BJ (cell line): ENCODE measurements at regions of chr2 and their contacts with region 1.

Region 1: GRCh38 chr2:191677646-191678436 is at the start of gene NABP1:
- DNase-seq: peak; percentile 84
- H3K4me3 ChIP-seq: peak within 1 kb of the TSS; percentile 76
- H3K27me3 ChIP-seq: no peaks in the 10 kb centered on the region
- CTCF ChIP-seq: no peak
- polyA plus RNA-seq, gene NABP1: 63.8 and 93.7 TPM in 2 replicates

Region 2: DNA sequence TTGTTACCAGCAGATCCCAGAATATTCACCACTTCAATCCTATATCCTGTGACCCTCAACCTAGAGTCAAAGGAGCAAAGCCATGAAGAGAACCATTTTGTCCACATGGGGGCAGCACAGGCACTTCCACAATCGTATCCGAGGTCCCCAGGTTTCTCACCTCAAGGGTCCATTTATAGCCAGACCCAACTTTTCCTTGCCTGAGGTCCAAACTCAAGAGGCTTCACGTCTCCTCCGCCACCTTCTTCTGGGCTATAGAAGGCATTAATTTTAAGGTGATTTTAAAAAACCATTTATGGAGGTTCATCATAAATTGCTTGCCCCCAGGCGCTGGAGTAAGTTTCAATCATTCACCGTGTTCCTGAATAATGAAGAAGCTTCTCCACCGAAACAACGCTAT is 111.5 kb before region 1 on chr2:
- CTCF ChIA-PET with region 1: interaction called, 18 read pairs
- POLR2A ChIA-PET with region 1: interaction called, 11 read pairs
- DNase-seq: no peak
- H3K4me3 ChIP-seq: no peak overlapping the region
- H3K27me3 ChIP-seq: no peaks in the 10 kb centered on the region
- CTCF ChIP-seq: peak; percentile 87

Region 3: DNA sequence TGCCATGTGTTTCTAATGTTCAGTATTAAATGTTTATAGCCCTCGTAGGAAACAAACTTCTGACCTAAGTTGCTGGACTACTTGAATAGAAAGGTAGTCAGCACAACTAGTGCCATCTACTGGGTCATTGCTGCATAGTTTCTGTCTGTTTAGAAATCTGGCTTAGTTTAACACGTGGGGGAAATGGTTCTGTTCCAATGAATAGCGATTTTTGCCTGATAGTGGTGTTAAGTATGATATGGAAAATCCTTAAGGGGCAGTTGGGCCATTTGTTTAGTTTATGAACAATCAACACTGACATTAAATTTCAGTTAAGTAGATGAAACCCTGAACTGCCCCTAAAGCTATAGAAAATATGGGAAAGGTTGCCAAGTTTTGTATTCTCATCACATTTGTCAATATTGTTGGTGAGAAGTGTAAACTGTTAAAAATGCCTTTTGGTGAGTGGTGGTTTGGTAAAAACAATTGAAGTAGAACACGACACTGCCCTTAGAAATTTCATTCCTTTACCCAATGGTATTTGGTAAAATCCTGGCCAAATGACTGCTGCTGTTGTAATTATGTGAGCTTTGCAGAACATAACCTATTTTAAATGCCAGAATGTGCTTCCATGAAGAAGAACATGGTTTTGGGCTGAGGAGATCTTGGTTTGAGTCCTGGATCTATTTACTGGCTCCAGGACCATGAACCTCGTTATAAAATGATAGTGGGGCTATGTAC is 13.3 kb after region 1 on chr2:
- CTCF ChIA-PET with region 1: interaction called, 4 read pairs
- POLR2A ChIA-PET with region 1: interaction called, 17 read pairs
- DNase-seq: peak; percentile 69
- H3K4me3 ChIP-seq: no peak overlapping the region
- H3K27me3 ChIP-seq: no peaks in the 10 kb centered on the region
- CTCF ChIP-seq: peak; percentile 76

Region 4: GRCh38 chr2:191728750-191729624 is 51.1 kb after region 1 on chr2:
- CTCF ChIA-PET with region 1: no interaction called
- POLR2A ChIA-PET with region 1: no interaction called
- DNase-seq: no peak
- H3K4me3 ChIP-seq: no peak overlapping the region
- H3K27me3 ChIP-seq: peaks cover 1% of the 10 kb centered on the region; the same call in 1 of the 2 replicates
- CTCF ChIP-seq: no peak